Caco-2 (cell line): ENCODE measurements at regions of chr19 and their contacts with region 1.

Region 1: DNA sequence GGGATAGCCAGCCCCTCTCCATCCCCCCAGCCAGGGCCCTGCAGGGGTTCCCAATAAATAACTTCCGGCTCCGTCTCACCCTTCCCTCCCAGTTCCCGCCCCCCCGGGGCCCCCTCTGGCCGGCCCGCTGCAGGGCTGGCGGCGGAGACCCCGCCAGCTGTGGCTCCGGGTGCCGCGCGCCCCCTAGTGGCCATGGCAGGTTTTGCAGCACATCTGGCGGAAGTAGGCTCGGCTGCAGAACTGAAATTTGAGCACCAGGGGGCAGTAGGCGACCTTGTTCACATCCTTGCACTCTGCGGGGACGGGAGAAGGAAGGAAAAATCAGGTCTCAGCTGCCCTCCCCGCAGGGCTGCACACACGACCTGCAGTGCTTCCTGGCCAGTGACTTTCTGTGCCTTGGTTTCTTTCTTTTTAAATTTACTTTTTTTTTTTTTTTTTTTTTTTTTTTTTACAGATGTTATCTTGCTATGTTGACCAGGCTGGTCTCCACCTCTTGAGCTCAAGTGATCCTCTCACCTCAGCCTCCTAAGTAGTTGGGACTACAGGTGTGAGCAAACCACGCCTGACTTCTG is 3.6 kb upstream of the MYO1F start:
- DNase-seq: peak; percentile 76 to 84
- H3K4me3 ChIP-seq: no peak overlapping the region
- H3K4me3 Mint-ChIP-seq: no peak overlapping the region
- H3K27ac Mint-ChIP-seq: no peak overlapping the region
- H3K4me1 ChIP-seq: no peaks in the 10 kb centered on the region
- H3K4me1 Mint-ChIP-seq: peaks cover 6% of the 10 kb centered on the region
- H3K27me3 ChIP-seq: no peaks in the 10 kb centered on the region
- H3K27me3 Mint-ChIP-seq: peaks cover 9% of the 10 kb centered on the region
- CTCF ChIP-seq: peak; percentile 98

Region 2: GRCh38 chr19:8690753-8691539 is 110.2 kb after region 1 on chr19:
- CTCF ChIA-PET with region 1: no interaction called
- POLR2A ChIA-PET with region 1: no interaction called
- intact Hi-C with region 1: loop called (anchors 5 kb)
- DNase-seq: no peak
- H3K4me3 ChIP-seq: no peak overlapping the region
- H3K4me3 Mint-ChIP-seq: no peak overlapping the region
- H3K27ac Mint-ChIP-seq: no peak overlapping the region
- H3K4me1 ChIP-seq: no peaks in the 10 kb centered on the region
- H3K4me1 Mint-ChIP-seq: no peaks in the 10 kb centered on the region
- H3K27me3 ChIP-seq: no peaks in the 10 kb centered on the region
- H3K27me3 Mint-ChIP-seq: peaks cover 8% of the 10 kb centered on the region
- CTCF ChIP-seq: no peak